Esophagus muscularis mucosa (tissue), 4 donors: ENCODE measurements at regions of chr4 and their contacts with region 1.

Region 1: GRCh38 chr4:165537028-165537648 is 158.3 kb downstream of the CPE start:
- DNase-seq: no peak
- H3K4me3 ChIP-seq: no peak overlapping the region
- H3K27ac ChIP-seq: peak overlapping the region in 1 of 4 donors; percentile 24
- H3K4me1 ChIP-seq: peaks cover 0 to 16% (median 2%) of the 10 kb centered on the region in 4 donors
- H3K27me3 ChIP-seq: no peaks in the 10 kb centered on the region
- CTCF ChIP-seq: peak; percentile 68 to 79 (median 72)
- EP300 ChIP-seq: no peak
- POLR2A ChIP-seq: no peak

Region 2: GRCh38 chr4:165493359-165493758 is 43.8 kb before region 1 on chr4:
- intact Hi-C with region 1: loop called (anchors 2 kb)
- DNase-seq: no peak
- H3K4me3 ChIP-seq: peak overlapping the region; percentile 18 to 32 (median 24)
- H3K27ac ChIP-seq: peak overlapping the region in 2 of 4 donors; percentile 22 to 28
- H3K4me1 ChIP-seq: peaks cover 0 to 25% (median 16%) of the 10 kb centered on the region in 4 donors
- H3K27me3 ChIP-seq: no peaks in the 10 kb centered on the region
- CTCF ChIP-seq: peak; percentile 78 to 79 (median 78)
- EP300 ChIP-seq: no peak
- POLR2A ChIP-seq: no peak

Region 3: DNA sequence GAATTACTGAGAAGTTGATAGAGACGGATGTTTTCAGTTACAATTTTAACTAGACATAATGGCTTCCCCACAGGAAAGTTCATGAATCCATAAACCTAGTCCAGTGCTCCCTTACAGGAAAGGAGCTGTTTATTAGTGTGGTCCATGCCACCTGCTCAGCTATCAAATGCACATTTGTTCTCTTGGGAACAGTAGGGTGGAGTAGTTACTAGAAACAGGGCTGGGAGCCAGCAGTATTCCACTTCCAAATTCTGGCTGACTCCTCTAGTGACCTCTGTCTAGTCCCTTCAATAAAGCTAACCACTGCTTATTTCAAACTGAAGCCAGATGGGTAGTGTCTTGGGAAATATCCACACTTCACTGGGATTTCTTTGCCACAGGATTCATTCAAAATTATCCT is 247.5 kb after region 1 on chr4:
- intact Hi-C with region 1: loop called (anchors 10 kb)
- DNase-seq: no peak
- H3K4me3 ChIP-seq: no peak overlapping the region
- H3K27ac ChIP-seq: peak overlapping the region in 1 of 4 donors; percentile 48
- H3K4me1 ChIP-seq: peaks cover 9 to 49% (median 44%) of the 10 kb centered on the region in 4 donors
- H3K27me3 ChIP-seq: no peaks in the 10 kb centered on the region
- CTCF ChIP-seq: no peak
- EP300 ChIP-seq: no peak
- POLR2A ChIP-seq: no peak

Region 4: GRCh38 chr4:166091912-166092510 is 554.9 kb after region 1 on chr4:
- intact Hi-C with region 1: loop called (anchors 2 kb)
- DNase-seq: no peak
- H3K4me3 ChIP-seq: no peak overlapping the region
- H3K27ac ChIP-seq: no peak overlapping the region
- H3K4me1 ChIP-seq: peaks cover 0 to 5% (median 0%) of the 10 kb centered on the region in 4 donors
- H3K27me3 ChIP-seq: no peaks in the 10 kb centered on the region
- CTCF ChIP-seq: peak; percentile 65 to 69 (median 68)
- EP300 ChIP-seq: no peak
- POLR2A ChIP-seq: no peak